ENCODE measurements at regions of chr4 and their contacts with region 1.

Region 1: DNA sequence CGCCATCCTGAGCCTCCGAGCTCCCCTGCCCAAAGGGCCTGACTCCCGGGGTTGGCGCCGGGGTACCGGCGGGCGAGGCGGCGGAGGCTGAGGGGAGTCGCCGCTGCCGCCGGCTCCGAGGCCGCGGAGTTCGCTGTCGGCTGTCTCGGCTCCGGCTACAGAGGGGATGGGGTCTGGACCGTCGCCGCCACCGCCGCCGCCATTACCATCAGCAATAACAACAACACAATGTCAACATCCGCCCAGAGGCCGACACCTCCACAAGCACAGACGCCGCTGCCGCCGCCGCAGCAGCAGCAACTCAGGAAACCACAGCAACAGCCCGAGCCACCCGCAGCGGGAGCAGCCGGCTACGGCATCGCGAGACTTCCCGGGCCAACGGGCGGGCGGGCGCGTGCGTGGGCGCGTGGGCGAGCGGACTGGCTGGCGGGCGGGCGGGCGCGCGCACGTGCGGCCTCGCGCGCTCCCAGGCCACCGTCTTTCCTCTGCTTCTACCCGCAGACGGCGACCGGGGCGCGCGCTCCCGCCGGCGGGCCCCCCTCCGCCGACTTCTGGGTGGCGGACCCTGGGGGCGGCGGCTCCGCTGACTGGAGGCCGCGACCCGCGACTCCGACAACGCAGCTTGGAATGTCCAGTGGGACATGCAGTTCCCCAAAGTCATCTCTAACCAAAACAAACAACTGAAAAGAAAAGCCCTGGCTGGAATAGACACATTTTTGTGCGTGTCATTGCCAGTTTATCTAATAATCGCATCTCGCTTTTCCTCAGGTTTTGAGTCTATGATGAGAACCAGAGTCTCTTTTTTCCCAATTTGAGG is at the start of gene CHIC2:
- DNase-seq: peak; percentile 97 to 99 (median 98)
- ATAC-seq: peak; percentile 86 to 89
- H3K4me3 ChIP-seq: peak within 1 kb of the TSS; percentile 93
- H3K27ac ChIP-seq: peak within 1 kb of the TSS; percentile 91
- H3K4me1 ChIP-seq: peaks cover 6% of the 10 kb centered on the region
- H3K27me3 ChIP-seq: no peaks in the 10 kb centered on the region
- total RNA-seq, gene CHIC2: 11.1 to 18.1 (median 13.3) TPM

Region 2: DNA sequence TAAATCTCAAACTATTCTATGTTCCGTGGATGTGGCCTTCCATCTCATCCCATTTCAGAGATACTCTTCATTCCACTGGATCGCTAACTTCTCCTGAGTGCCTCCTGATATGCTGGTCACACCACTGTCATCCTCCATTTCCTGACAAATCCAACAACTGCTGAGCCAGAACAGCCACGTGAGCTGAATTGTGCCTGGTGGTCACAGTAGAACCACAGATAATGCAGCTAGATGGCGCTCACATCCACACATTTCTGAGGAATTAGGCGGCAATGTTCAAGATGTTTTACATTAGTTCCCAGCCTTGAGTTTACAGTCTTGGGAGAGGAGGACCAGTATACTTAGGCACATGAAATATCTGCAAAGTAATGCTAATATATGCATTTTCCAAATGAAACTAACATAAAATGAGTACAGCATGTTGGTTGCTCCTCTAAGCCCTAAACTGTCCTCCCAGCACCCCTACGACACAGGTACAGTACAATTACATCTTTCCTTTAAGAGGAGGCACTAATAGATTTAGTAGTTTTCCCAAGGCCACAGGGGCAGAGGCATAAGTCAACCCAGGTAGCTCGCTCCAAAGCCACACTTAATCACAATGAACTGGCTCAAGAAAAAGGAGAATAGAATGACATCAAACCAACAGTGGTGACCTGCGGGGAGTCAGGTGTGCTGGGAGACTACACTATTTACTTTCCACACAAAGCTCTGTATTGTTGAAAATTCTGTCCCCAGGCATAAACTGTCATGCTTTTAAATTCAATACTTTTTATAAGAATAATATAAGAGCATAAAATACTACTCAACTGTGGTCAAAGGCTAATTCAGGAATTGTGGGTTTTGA is 134.3 kb before region 1 on chr4:
- intact Hi-C with region 1: loop called in 1 of 4 experiments (anchors 10 kb)
- DNase-seq: peak; percentile 77 to 85 (median 78)
- ATAC-seq: peak; percentile 89 to 92
- H3K4me3 ChIP-seq: no peak overlapping the region
- H3K27ac ChIP-seq: no peak overlapping the region
- H3K4me1 ChIP-seq: no peaks in the 10 kb centered on the region
- H3K27me3 ChIP-seq: no peaks in the 10 kb centered on the region